Aorta (tissue), 5 donors: ENCODE measurements at regions of chr2 and their contacts with region 1.

Region 1: GRCh38 chr2:207746131-207746530 is 23.6 kb downstream of the FZD5 start:
- DNase-seq: peak in 1 of 2 donors; percentile 50
- ATAC-seq: peak; percentile 82
- H3K4me3 ChIP-seq: no peak overlapping the region
- H3K27ac ChIP-seq: no peak overlapping the region
- H3K4me1 ChIP-seq: no peaks in the 10 kb centered on the region
- H3K27me3 ChIP-seq: no peaks in the 10 kb centered on the region

Region 2: DNA sequence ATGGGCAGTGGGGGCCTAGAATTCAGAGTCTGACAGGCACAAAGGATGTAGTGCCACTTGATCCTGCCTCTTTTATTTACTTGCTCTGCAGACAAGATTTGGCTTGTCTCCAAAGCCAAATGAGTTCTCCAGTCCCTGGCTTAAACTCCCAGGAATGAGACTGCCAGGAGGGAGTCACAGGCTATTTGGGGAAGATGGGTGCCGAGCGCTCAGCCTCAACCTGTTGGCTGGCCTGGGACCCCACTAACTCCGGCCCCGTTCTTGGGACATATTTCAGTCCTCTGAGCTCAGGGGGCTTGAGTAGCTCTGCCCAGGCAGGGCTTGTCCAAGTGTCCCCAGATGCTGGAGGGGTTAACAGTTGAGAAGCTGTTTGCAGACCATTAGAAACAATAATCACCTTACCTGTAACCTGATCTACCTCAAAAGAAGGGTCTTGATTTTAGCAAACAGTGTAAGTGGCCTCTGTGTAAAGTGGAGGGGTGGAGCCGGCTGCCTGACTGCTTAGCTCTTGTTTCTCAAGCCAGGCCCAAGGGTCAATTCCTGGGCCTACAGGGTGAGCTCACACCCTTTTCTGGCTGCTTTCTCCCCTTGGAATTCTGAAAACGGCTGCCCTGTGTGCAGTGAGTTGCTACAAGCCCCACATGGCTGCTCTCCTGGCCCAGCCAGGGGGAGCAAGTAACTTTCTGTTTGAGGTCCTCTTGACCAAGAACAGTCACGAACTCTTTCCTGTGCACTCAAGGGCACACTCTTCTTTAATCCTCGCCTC is 50.6 kb after region 1 on chr2:
- intact Hi-C with region 1: no loop called
- DNase-seq: no peak
- ATAC-seq: no peak
- H3K4me3 ChIP-seq: no peak overlapping the region
- H3K27ac ChIP-seq: no peak overlapping the region
- H3K4me1 ChIP-seq: no peaks in the 10 kb centered on the region
- H3K27me3 ChIP-seq: no peaks in the 10 kb centered on the region

Region 3: GRCh38 chr2:207974216-207974605 is 228.1 kb after region 1 on chr2:
- intact Hi-C with region 1: loop called in 1 of 2 experiments (anchors 5 kb)
- DNase-seq: no peak
- ATAC-seq: no peak
- H3K4me3 ChIP-seq: no peak overlapping the region
- H3K27ac ChIP-seq: no peak overlapping the region
- H3K4me1 ChIP-seq: no peaks in the 10 kb centered on the region
- H3K27me3 ChIP-seq: no peaks in the 10 kb centered on the region

Region 4: GRCh38 chr2:208040199-208041171 is 294.4 kb after region 1 on chr2:
- intact Hi-C with region 1: loop called (anchors 5 kb)
- DNase-seq: peak; percentile 82 to 88
- ATAC-seq: peak; percentile 77
- H3K4me3 ChIP-seq: no peak overlapping the region
- H3K27ac ChIP-seq: no peak overlapping the region
- H3K4me1 ChIP-seq: no peaks in the 10 kb centered on the region
- H3K27me3 ChIP-seq: no peaks in the 10 kb centered on the region

Region 5: GRCh38 chr2:208072250-208072892 is 326.2 kb after region 1 on chr2:
- intact Hi-C with region 1: loop called in 1 of 2 experiments (anchors 2 kb)
- DNase-seq: peak in 1 of 2 donors; percentile 63
- ATAC-seq: peak; percentile 83
- H3K4me3 ChIP-seq: no peak overlapping the region
- H3K27ac ChIP-seq: no peak overlapping the region
- H3K4me1 ChIP-seq: no peaks in the 10 kb centered on the region
- H3K27me3 ChIP-seq: no peaks in the 10 kb centered on the region

Region 6: DNA sequence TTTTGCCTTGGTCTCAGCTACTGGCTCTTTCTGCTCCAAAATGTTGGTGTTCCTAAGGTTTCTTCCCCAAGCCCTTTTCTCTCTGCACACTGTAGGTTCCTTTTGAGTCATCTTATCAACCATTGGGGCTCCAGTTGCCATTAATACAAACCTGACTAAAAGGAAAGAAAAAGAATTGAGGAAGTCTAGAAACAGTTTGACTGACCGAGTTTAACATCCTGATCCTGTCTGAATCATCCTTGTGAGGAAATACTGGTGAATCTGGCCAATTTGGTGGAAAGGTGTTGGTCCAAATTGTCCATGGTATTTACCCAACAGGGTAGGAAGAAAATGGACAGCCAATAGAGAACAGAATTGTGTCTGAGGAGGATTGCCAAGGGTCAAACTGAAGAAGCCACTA is 339.9 kb after region 1 on chr2:
- intact Hi-C with region 1: no loop called
- DNase-seq: no peak
- ATAC-seq: no peak
- H3K4me3 ChIP-seq: no peak overlapping the region
- H3K27ac ChIP-seq: no peak overlapping the region
- H3K4me1 ChIP-seq: no peaks in the 10 kb centered on the region
- H3K27me3 ChIP-seq: no peaks in the 10 kb centered on the region